Breast epithelium (tissue), 4 donors: ENCODE measurements at regions of chr3 and their contacts with region 1.

Region 1: GRCh38 chr3:127275287-127275781 is 12.5 kb downstream of the PRR20G start:
- DNase-seq: peak in 1 of 2 donors; percentile 90
- H3K4me3 ChIP-seq: peak overlapping the region in 1 of 3 donors; percentile 7
- H3K27ac ChIP-seq: peak overlapping the region; percentile 77 to 84
- H3K4me1 ChIP-seq: peaks cover 3 to 14% of the 10 kb centered on the region in 2 donors
- H3K27me3 ChIP-seq: no peaks in the 10 kb centered on the region
- CTCF ChIP-seq: no peak
- POLR2A ChIP-seq: no peak

Region 2: GRCh38 chr3:127258733-127259132 is 16.6 kb before region 1 on chr3:
- intact Hi-C with region 1: loop called (anchors 1 kb)
- DNase-seq: no peak
- H3K4me3 ChIP-seq: no peak overlapping the region
- H3K27ac ChIP-seq: no peak overlapping the region
- H3K4me1 ChIP-seq: no peaks in the 10 kb centered on the region
- H3K27me3 ChIP-seq: no peaks in the 10 kb centered on the region
- CTCF ChIP-seq: no peak
- POLR2A ChIP-seq: no peak